T-cell (primary cell): ENCODE measurements at regions of chr12 and their contacts with region 1.

Region 1: DNA sequence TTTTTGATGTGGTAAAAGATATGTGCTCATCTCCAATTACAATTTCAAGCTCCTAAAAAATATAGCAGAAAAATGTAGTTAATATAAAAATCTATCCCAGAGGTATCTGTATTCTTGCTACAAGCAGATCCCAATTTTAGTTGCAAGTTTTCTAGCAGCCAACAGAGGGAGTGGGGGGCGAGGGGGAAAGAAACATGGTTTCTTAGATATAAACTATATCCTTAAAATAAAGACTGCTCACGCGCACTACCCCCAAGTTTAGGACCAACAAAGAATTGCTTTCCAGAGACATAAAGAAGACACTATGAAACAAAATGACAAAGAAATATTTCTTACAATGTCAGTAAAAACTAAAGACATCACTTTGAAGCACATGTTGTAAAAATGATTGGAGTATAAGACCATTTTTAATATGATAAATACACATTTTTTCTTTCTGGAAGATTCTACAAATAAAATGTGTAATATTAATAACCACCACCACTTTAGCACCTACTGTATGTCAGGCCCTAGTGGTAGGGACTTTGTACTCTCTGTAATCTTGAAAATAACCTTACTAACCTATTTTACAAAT is 5.4 kb downstream of the MAGOHB start:
- DNase-seq: peak in 3 of 35 experiments; percentile 5 to 20 (median 14)
- ATAC-seq: no peak
- H3K4me3 ChIP-seq: no peak overlapping the region
- H3K4me3 Mint-ChIP-seq: no peak overlapping the region
- H3K27ac ChIP-seq: no peak overlapping the region
- H3K27ac Mint-ChIP-seq: no peak overlapping the region
- H3K4me1 ChIP-seq: peaks cover 8 to 10% of the 10 kb centered on the region in 2 experiments
- H3K4me1 Mint-ChIP-seq: peaks cover 18 to 24% (median 20%) of the 10 kb centered on the region in 3 donors
- H3K27me3 ChIP-seq: no peaks in the 10 kb centered on the region
- H3K27me3 Mint-ChIP-seq: no peaks in the 10 kb centered on the region

Region 2: GRCh38 chr12:10759657-10760056 is 151.7 kb after region 1 on chr12:
- CTCF ChIA-PET with region 1: no interaction called
- POLR2A ChIA-PET with region 1: no interaction called
- DNase-seq: no peak
- ATAC-seq: no peak
- H3K4me3 ChIP-seq: no peak overlapping the region
- H3K4me3 Mint-ChIP-seq: no peak overlapping the region
- H3K27ac ChIP-seq: no peak overlapping the region
- H3K27ac Mint-ChIP-seq: no peak overlapping the region
- H3K4me1 ChIP-seq: no peaks in the 10 kb centered on the region
- H3K4me1 Mint-ChIP-seq: no peaks in the 10 kb centered on the region
- H3K27me3 ChIP-seq: peaks cover 0 to 17% of the 10 kb centered on the region in 2 experiments
- H3K27me3 Mint-ChIP-seq: peaks cover 30 to 43% of the 10 kb centered on the region in 2 donors

Region 3: DNA sequence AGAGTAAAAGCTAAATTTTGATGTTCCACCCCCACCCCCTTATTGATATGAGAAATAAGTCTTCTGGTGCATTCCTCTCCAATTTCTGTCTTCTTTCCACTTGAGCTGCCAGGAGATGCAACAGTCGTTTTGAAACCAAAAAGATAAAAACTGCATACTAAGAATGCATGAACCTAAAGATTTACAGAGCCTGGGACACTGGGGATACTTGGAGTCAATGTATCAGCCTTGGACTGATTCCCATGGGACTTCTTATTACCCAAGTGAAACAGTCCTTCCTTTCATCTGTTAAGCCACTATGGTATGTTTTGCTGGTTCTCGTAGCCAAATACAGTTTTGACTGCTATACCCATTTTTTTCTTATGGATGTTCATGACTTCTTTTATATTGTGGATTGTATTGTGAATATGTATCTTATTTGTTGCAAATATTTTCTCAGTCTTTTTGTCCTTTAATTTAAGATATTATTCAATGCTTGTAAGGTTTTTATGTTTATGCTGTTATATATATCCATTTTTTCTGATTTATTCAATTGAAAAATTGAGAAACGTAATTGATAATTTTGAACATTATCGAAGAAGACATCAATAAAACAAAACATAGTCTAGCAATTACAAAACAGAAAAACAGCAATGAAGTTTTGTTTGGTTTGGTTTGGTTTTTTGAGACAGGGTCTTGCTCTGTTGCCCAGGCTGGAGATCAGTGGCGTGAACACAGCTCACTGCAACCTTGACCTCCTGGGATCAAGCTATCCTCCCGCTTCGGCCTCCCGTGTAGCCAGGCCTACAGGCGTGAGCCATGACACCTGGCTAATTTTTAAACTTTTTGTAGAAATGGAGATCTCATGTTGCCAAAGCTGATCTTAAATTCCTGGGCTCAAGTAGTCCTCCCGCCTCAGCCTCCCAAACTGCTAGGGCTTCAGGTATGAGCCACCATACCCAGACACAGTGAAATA is 956.1 kb after region 1 on chr12:
- CTCF ChIA-PET with region 1: interaction called in 1 of 2 experiments, 10 read pairs
- POLR2A ChIA-PET with region 1: no interaction called
- DNase-seq: no peak
- ATAC-seq: no peak
- H3K4me3 ChIP-seq: no peak overlapping the region
- H3K4me3 Mint-ChIP-seq: no peak overlapping the region
- H3K27ac ChIP-seq: no peak overlapping the region
- H3K27ac Mint-ChIP-seq: no peak overlapping the region
- H3K4me1 ChIP-seq: no peaks in the 10 kb centered on the region
- H3K4me1 Mint-ChIP-seq: no peaks in the 10 kb centered on the region
- H3K27me3 ChIP-seq: peaks cover 0 to 5% of the 10 kb centered on the region in 2 experiments
- H3K27me3 Mint-ChIP-seq: no peaks in the 10 kb centered on the region